IMR-90 (cell line): ENCODE measurements at regions of chr11 and their contacts with region 1.

Region 1: GRCh38 chr11:45110562-45110961 is 35.9 kb upstream of the PRDM11 start:
- DNase-seq: peak; percentile 68
- ATAC-seq: peak; percentile 90
- H3K4me3 ChIP-seq: no peak overlapping the region
- H3K27ac ChIP-seq: no peak overlapping the region
- H3K4me1 ChIP-seq: no peaks in the 10 kb centered on the region
- H3K27me3 ChIP-seq: peaks cover 20% of the 10 kb centered on the region
- CTCF ChIP-seq: peak; percentile 82
- POLR2A ChIP-seq: no peak
- RAD21 ChIP-seq: peak; percentile 87

Region 2: DNA sequence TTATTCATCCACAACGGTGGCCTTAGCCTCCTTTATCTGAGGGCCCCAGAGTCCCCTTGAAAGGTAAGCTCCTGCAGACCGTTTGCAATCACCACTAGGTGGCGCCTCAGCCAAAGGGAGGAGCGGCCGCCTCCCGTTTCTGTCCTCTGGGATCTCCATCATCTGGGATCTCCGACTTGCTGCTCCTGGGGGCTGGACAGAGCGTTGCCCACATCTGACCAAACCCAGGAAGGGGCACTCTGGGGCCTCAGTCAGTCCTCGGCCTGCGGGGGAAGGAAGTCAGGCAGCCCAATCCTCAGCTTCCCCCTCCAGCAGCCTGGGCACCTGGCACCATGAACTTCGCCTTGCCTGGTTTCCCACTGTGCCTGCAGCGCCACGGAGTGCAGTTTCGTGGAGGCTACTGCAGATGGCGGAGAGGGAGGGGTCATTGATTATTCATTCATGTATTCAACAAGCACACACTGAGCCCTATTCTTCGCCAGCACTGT is 183.3 kb before region 1 on chr11:
- CTCF ChIA-PET with region 1: interaction called, 59 read pairs
- POLR2A ChIA-PET with region 1: no interaction called
- dilution Hi-C with region 1: no loop called
- in situ Hi-C with region 1: loop called (anchors 5 kb)
- intact Hi-C with region 1: loop called (anchors 1 kb)
- DNase-seq: peak; percentile 66
- ATAC-seq: peak; percentile 87
- H3K4me3 ChIP-seq: no peak overlapping the region
- H3K27ac ChIP-seq: no peak overlapping the region
- H3K4me1 ChIP-seq: no peaks in the 10 kb centered on the region
- H3K27me3 ChIP-seq: peaks cover 10% of the 10 kb centered on the region
- CTCF ChIP-seq: peak; percentile 83
- POLR2A ChIP-seq: no peak
- RAD21 ChIP-seq: peak; percentile 76

Region 3: DNA sequence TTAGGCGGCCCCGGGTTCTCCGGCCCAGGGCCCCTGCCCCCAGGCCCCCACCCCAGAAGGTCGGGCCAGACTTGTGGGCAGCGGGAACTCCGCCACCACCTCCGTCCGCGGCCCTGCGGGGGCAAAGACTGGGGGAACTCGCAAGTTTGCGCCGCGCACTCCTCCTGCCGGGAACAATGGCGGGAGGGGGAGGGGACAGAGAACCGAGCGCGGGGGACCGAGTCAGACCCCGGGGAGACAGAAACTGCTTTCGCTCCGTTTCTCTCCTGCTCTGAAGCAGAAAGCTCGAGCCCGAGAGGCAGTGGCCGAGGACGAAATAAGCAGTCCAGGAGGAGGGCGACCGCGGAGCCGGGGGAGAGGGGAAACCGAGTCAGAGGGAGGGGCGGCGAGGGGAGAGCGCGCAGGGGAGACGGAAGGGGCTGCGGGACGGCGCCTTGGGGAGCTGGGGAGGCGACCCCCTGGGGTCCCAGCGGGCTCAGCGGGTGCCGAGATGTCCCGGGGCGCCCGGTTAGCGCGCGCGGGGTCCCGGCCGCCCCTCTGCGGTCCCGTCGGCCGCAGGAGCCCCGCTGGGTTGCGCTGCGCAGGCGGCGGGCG is 160.4 kb before region 1 on chr11:
- CTCF ChIA-PET with region 1: no interaction called
- POLR2A ChIA-PET with region 1: no interaction called
- dilution Hi-C with region 1: no loop called
- in situ Hi-C with region 1: no loop called
- intact Hi-C with region 1: no loop called
- DNase-seq: no peak
- ATAC-seq: peak; percentile 15
- H3K4me3 ChIP-seq: peak overlapping the region; percentile 95
- H3K27ac ChIP-seq: peak overlapping the region; percentile 87
- H3K4me1 ChIP-seq: peaks cover 7% of the 10 kb centered on the region; the same call in 1 of the 2 replicates
- H3K27me3 ChIP-seq: no peaks in the 10 kb centered on the region
- CTCF ChIP-seq: no peak
- POLR2A ChIP-seq: no peak
- RAD21 ChIP-seq: no peak

Region 4: DNA sequence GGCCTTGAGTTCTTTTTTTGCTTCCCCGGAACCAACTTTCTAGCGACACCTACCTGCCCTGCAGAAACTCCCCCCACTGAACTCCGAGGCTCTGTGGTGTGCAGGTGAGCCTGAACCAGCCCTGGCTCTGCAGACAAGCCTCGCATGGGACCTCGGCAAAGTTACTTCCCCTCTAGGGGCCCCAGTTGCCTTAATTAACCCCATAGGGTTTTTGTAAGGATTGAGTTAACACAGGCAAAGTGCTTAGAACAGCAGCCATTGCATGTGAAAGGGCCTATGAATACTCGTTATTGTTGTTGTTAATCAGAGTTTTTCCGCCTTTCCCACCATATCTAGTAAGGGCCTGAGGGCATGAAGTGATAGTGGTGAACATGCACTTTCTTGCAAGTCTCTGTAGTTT is 188.2 kb after region 1 on chr11:
- CTCF ChIA-PET with region 1: interaction called, 11 read pairs
- POLR2A ChIA-PET with region 1: no interaction called
- dilution Hi-C with region 1: no loop called
- in situ Hi-C with region 1: loop called (anchors 5 kb)
- intact Hi-C with region 1: loop called (anchors 1 kb)
- DNase-seq: no peak
- ATAC-seq: no peak
- H3K4me3 ChIP-seq: no peak overlapping the region
- H3K27ac ChIP-seq: no peak overlapping the region
- H3K4me1 ChIP-seq: no peaks in the 10 kb centered on the region
- H3K27me3 ChIP-seq: peaks cover 15% of the 10 kb centered on the region
- CTCF ChIP-seq: no peak
- POLR2A ChIP-seq: no peak
- RAD21 ChIP-seq: no peak

Region 5: GRCh38 chr11:45322891-45323600 is 212.5 kb after region 1 on chr11:
- CTCF ChIA-PET with region 1: no interaction called
- POLR2A ChIA-PET with region 1: no interaction called
- dilution Hi-C with region 1: no loop called
- in situ Hi-C with region 1: loop called (anchors 10 kb)
- intact Hi-C with region 1: no loop called
- DNase-seq: no peak
- ATAC-seq: no peak
- H3K4me3 ChIP-seq: no peak overlapping the region
- H3K27ac ChIP-seq: no peak overlapping the region
- H3K4me1 ChIP-seq: no peaks in the 10 kb centered on the region
- H3K27me3 ChIP-seq: peaks cover 3% of the 10 kb centered on the region; the same call in 1 of the 2 replicates
- CTCF ChIP-seq: no peak
- POLR2A ChIP-seq: no peak
- RAD21 ChIP-seq: no peak

Region 6: GRCh38 chr11:45332276-45332934 is 221.8 kb after region 1 on chr11:
- CTCF ChIA-PET with region 1: interaction called, 7 read pairs
- POLR2A ChIA-PET with region 1: no interaction called
- dilution Hi-C with region 1: no loop called
- in situ Hi-C with region 1: loop called (anchors 10 kb)
- intact Hi-C with region 1: loop called (anchors 1 kb)
- DNase-seq: peak; percentile 19
- ATAC-seq: peak; percentile 78
- H3K4me3 ChIP-seq: no peak overlapping the region
- H3K27ac ChIP-seq: no peak overlapping the region
- H3K4me1 ChIP-seq: peaks cover 4% of the 10 kb centered on the region; the same call in 1 of the 2 replicates
- H3K27me3 ChIP-seq: peaks cover 3% of the 10 kb centered on the region
- CTCF ChIP-seq: peak; percentile 53
- POLR2A ChIP-seq: no peak
- RAD21 ChIP-seq: peak; percentile 67